PC-3 (cell line): ENCODE measurements at regions of chr18 and their contacts with region 1.

Region 1: GRCh38 chr18:32530947-32531651 is 60.4 kb upstream of the GAREM1 start:
- DNase-seq: peak; percentile 46
- ATAC-seq: no peak
- H3K4me3 ChIP-seq: no peak overlapping the region
- H3K27ac ChIP-seq: no peak overlapping the region
- H3K4me1 ChIP-seq: no peaks in the 10 kb centered on the region
- H3K27me3 ChIP-seq: no peaks in the 10 kb centered on the region
- CTCF ChIP-seq: no peak

Region 2: DNA sequence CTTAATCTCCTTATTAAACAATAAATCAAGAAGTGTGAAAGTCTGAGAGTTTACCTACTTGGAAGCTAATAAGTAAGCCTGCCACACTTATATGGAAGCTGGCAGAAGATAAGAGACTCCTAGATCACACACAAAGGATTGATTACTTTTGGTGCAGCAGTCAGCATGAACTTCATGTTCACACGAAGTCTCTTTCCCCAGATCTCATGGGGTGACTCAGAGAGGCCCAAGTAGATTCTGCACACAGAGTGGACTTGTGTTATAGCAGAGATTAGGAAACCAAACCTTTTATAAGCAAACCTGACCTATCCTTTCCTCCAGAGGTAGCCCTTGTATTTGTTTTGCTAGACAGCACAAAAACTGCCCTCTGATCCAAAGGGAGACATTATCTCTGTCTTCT is 50.5 kb before region 1 on chr18:
- CTCF ChIA-PET with region 1: no interaction called
- POLR2A ChIA-PET with region 1: no interaction called
- intact Hi-C with region 1: loop called (anchors 5 kb)
- DNase-seq: no peak
- ATAC-seq: no peak
- H3K4me3 ChIP-seq: no peak overlapping the region
- H3K27ac ChIP-seq: no peak overlapping the region
- H3K4me1 ChIP-seq: no peaks in the 10 kb centered on the region
- H3K27me3 ChIP-seq: no peaks in the 10 kb centered on the region
- CTCF ChIP-seq: no peak